ENCODE measurements at regions of chr12 and their contacts with region 1.

Region 1: GRCh38 chr12:57063991-57064685 is 14.2 kb upstream of the MYO1A start:
- DNase-seq: peak; percentile 77 to 88 (median 84)
- H3K4me3 ChIP-seq: peak overlapping the region; percentile 5 to 24
- H3K4me3 Mint-ChIP-seq: peak overlapping the region; percentile 73 to 85 (median 82)
- H3K27ac ChIP-seq: peak overlapping the region; percentile 74
- H3K27ac Mint-ChIP-seq: peak overlapping the region; percentile 79 to 99 (median 96)
- H3K4me1 ChIP-seq: peaks cover 30% of the 10 kb centered on the region
- H3K4me1 Mint-ChIP-seq: peaks cover 15 to 33% (median 20%) of the 10 kb centered on the region in 4 donors
- H3K27me3 ChIP-seq: no peaks in the 10 kb centered on the region
- H3K27me3 Mint-ChIP-seq: no peaks in the 10 kb centered on the region

Region 2: GRCh38 chr12:56751712-56752598 is 312.2 kb before region 1 on chr12 and contains the start of gene PRIM1:
- CTCF ChIA-PET with region 1: interaction called, 3 read pairs
- POLR2A ChIA-PET with region 1: no interaction called
- intact Hi-C with region 1: loop called (anchors 1 kb)
- DNase-seq: peak; percentile 80 to 83 (median 82)
- H3K4me3 ChIP-seq: peak within 1 kb of the TSS; percentile 80 to 92
- H3K4me3 Mint-ChIP-seq: peak within 1 kb of the TSS; percentile 96 to 99 (median 98)
- H3K27ac ChIP-seq: peak within 1 kb of the TSS; percentile 82
- H3K27ac Mint-ChIP-seq: peak within 1 kb of the TSS; percentile 94 to 98 (median 96)
- H3K4me1 ChIP-seq: peaks cover 10% of the 10 kb centered on the region
- H3K4me1 Mint-ChIP-seq: peaks cover 20 to 43% (median 28%) of the 10 kb centered on the region in 4 donors
- H3K27me3 ChIP-seq: no peaks in the 10 kb centered on the region
- H3K27me3 Mint-ChIP-seq: no peaks in the 10 kb centered on the region
- total RNA-seq, gene PRIM1: 30.2 to 34.3 TPM

Region 3: DNA sequence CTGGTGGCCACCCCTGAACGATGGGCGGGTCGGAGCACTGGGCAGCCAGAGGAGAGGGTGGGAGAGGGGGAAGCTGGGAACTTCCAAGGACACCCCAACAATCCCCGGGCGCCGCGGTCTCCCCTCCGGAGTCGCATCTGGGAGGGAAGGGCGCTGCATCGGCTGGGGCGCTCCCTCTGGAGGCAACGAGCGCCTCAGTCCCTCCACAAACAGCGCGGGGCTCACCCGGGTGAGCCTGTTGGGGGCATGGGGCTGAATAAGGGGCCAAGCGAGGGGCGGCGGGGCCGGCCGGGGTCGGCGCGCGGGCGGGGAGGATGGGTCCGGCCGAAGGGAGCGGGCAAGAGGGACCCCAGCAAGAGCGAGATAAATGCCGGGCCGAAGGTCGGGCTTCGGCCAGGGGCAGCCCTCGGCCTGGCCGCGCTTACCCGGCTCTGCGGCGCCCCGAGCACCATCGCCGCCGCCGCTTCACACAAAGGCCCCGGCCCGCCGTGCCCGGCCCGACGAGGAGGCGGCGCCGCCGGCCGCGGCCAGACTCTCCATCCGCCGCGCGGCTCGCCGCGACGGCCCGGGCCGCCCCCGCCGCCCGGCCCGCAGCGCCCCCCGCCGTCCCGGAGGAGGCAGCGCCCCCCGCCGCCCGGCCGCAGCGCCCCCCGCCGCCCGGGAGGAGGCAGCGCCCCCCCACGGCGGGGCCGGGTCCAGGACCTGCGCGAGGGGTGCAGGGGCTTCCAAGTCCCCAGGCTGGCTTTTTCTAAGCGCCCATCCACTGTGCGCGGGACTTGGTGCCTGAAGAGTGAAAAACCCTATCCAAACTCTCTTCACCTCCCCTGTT is 57.9 kb before region 1 on chr12 and contains the start of gene ZBTB39:
- CTCF ChIA-PET with region 1: interaction called, 226 read pairs
- POLR2A ChIA-PET with region 1: interaction called, 3 read pairs
- intact Hi-C with region 1: loop called (anchors 1 kb)
- DNase-seq: peak; percentile 50 to 76 (median 68)
- H3K4me3 ChIP-seq: peak within 1 kb of the TSS; percentile 44 to 60
- H3K4me3 Mint-ChIP-seq: peak within 1 kb of the TSS; percentile 90 to 98 (median 96)
- H3K27ac ChIP-seq: peak within 1 kb of the TSS; percentile 69
- H3K27ac Mint-ChIP-seq: peak within 1 kb of the TSS; percentile 83 to 96 (median 95)
- H3K4me1 ChIP-seq: peaks cover 52% of the 10 kb centered on the region
- H3K4me1 Mint-ChIP-seq: peaks cover 36 to 67% (median 52%) of the 10 kb centered on the region in 4 donors
- H3K27me3 ChIP-seq: no peaks in the 10 kb centered on the region
- H3K27me3 Mint-ChIP-seq: no peaks in the 10 kb centered on the region
- total RNA-seq, gene ZBTB39: 10.8 to 12.2 TPM

Region 4: GRCh38 chr12:57031138-57031725 is 32.9 kb before region 1 on chr12:
- CTCF ChIA-PET with region 1: interaction called, 18 read pairs
- POLR2A ChIA-PET with region 1: interaction called, 3 read pairs
- intact Hi-C with region 1: no loop called
- DNase-seq: peak in 4 of 5 donors; percentile 17 to 29 (median 22)
- H3K4me3 ChIP-seq: no peak overlapping the region
- H3K4me3 Mint-ChIP-seq: peak overlapping the region in 7 of 8 donors; percentile 25 to 60 (median 37)
- H3K27ac ChIP-seq: no peak overlapping the region
- H3K27ac Mint-ChIP-seq: peak overlapping the region in 4 of 7 donors; percentile 26 to 72 (median 38)
- H3K4me1 ChIP-seq: peaks cover 30% of the 10 kb centered on the region
- H3K4me1 Mint-ChIP-seq: peaks cover 23 to 40% (median 35%) of the 10 kb centered on the region in 4 donors
- H3K27me3 ChIP-seq: no peaks in the 10 kb centered on the region
- H3K27me3 Mint-ChIP-seq: peaks cover 0 to 2% of the 10 kb centered on the region in 2 donors

Region 5: GRCh38 chr12:57046947-57047890 is 16.9 kb before region 1 on chr12:
- CTCF ChIA-PET with region 1: interaction called, 25 read pairs
- POLR2A ChIA-PET with region 1: no interaction called
- intact Hi-C with region 1: no loop called
- DNase-seq: peak in 4 of 5 donors; percentile 18 to 46 (median 36)
- H3K4me3 ChIP-seq: peak overlapping the region in 1 of 2 donors; percentile 5
- H3K4me3 Mint-ChIP-seq: peak overlapping the region in 7 of 8 donors; percentile 29 to 70 (median 61)
- H3K27ac ChIP-seq: no peak overlapping the region
- H3K27ac Mint-ChIP-seq: peak overlapping the region in 5 of 7 donors; percentile 56 to 89 (median 82)
- H3K4me1 ChIP-seq: peaks cover 18% of the 10 kb centered on the region
- H3K4me1 Mint-ChIP-seq: peaks cover 9 to 24% (median 18%) of the 10 kb centered on the region in 4 donors
- H3K27me3 ChIP-seq: no peaks in the 10 kb centered on the region
- H3K27me3 Mint-ChIP-seq: no peaks in the 10 kb centered on the region

Region 6: GRCh38 chr12:57078519-57079404 is 14.6 kb after region 1 on chr12 and contains the start of gene NEMP1:
- CTCF ChIA-PET with region 1: interaction called, 21 read pairs
- POLR2A ChIA-PET with region 1: interaction called, 33 read pairs
- intact Hi-C with region 1: loop called (anchors 1 kb)
- DNase-seq: peak; percentile 94 to 100 (median 99)
- H3K4me3 ChIP-seq: peak within 1 kb of the TSS; percentile 73 to 94
- H3K4me3 Mint-ChIP-seq: peak within 1 kb of the TSS; percentile 92 to 98 (median 94)
- H3K27ac ChIP-seq: peak within 1 kb of the TSS; percentile 75
- H3K27ac Mint-ChIP-seq: peak within 1 kb of the TSS; percentile 86 to 98 (median 96)
- H3K4me1 ChIP-seq: peaks cover 18% of the 10 kb centered on the region
- H3K4me1 Mint-ChIP-seq: peaks cover 10 to 37% (median 18%) of the 10 kb centered on the region in 4 donors
- H3K27me3 ChIP-seq: no peaks in the 10 kb centered on the region
- H3K27me3 Mint-ChIP-seq: no peaks in the 10 kb centered on the region
- total RNA-seq, gene NEMP1: 27.2 TPM

Region 7: GRCh38 chr12:57088459-57089248 is 24.5 kb after region 1 on chr12 and contains the start of gene NAB2:
- CTCF ChIA-PET with region 1: interaction called, 184 read pairs
- POLR2A ChIA-PET with region 1: interaction called, 108 read pairs
- intact Hi-C with region 1: loop called (anchors 1 kb)
- DNase-seq: peak; percentile 89 to 94 (median 92)
- H3K4me3 ChIP-seq: peak within 1 kb of the TSS; percentile 90 to 91
- H3K4me3 Mint-ChIP-seq: peak within 1 kb of the TSS; percentile 92 to 98 (median 95)
- H3K27ac ChIP-seq: peak within 1 kb of the TSS; percentile 97
- H3K27ac Mint-ChIP-seq: peak within 1 kb of the TSS; percentile 97 to 99 (median 98)
- H3K4me1 ChIP-seq: peaks cover 52% of the 10 kb centered on the region
- H3K4me1 Mint-ChIP-seq: peaks cover 40 to 78% (median 53%) of the 10 kb centered on the region in 4 donors
- H3K27me3 ChIP-seq: no peaks in the 10 kb centered on the region
- H3K27me3 Mint-ChIP-seq: no peaks in the 10 kb centered on the region
- total RNA-seq, gene NAB2: 17.5 to 19.5 TPM

Region 8: DNA sequence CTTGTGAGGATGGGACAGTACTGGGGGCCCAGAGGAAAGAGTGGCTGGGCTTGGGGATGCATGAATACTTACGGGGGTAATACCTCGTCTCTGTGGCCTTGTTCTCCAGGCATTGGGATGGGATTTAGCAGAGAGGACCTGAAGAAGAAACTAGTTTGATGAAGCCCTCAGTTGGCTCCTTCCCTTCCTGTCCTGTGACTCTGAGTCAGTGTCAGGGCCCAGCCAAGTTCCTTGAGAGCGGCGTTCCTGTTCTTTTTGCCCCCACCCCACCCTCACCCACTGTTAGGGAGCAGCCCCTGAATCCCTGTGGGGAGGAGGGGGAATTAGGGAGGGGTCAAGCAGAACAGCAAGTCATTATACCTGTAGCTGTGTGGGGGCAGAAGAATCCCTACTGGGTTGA is 88.5 kb after region 1 on chr12:
- CTCF ChIA-PET with region 1: no interaction called
- POLR2A ChIA-PET with region 1: no interaction called
- intact Hi-C with region 1: no loop called
- DNase-seq: no peak
- H3K4me3 ChIP-seq: no peak overlapping the region
- H3K4me3 Mint-ChIP-seq: no peak overlapping the region
- H3K27ac ChIP-seq: no peak overlapping the region
- H3K27ac Mint-ChIP-seq: no peak overlapping the region
- H3K4me1 ChIP-seq: no peaks in the 10 kb centered on the region
- H3K4me1 Mint-ChIP-seq: peaks cover 2 to 7% (median 2%) of the 10 kb centered on the region in 4 donors
- H3K27me3 ChIP-seq: no peaks in the 10 kb centered on the region
- H3K27me3 Mint-ChIP-seq: no peaks in the 10 kb centered on the region

Measured in CD4-positive, alpha-beta memory T cell (primary cell).